Vagina (tissue), 2 donors: ENCODE measurements at regions of chrX and their contacts with region 1.

Region 1: GRCh38 chrX:29690061-29690460 is 525.3 kb upstream of the MAGEB2 start:
- DNase-seq: no peak
- H3K4me3 ChIP-seq: no peak overlapping the region
- H3K27ac ChIP-seq: no peak overlapping the region
- H3K4me1 ChIP-seq: no peaks in the 10 kb centered on the region
- H3K27me3 ChIP-seq: no peaks in the 10 kb centered on the region
- CTCF ChIP-seq: no peak
- POLR2A ChIP-seq: no peak

Region 2: DNA sequence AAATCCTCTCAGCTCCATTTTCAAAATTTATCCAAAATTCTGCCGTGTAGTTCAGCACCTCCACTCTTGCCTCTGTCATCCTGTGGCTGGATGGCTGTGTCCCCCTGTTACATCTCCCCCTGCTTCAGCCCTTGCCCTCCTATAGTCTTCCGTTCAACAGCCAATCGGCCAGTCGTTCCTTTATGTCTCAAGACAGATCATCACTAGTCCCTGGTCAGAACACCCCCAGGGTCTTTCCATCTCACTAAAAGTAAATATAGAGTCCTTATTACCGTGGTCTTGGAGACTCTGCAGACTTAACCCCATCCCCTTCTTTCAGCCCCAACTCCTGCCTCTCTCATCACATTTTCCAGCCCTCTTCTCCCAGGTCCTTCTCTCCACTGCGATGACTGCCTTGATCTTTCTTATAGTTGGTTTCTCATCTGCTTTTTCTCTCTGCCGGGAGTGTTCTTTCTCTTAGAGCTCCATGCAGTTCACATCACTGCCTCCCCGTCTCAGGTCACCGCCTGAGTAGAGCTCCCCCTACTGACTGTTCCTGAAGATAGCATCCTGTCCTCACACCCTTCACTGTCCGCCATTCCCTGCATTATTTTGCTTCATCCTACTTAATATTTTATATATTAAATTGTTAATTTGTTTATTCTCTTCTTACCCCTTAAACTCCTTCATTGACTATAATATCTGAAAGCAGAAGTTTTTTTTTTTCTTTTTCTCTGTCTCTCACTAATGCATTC is 211.6 kb before region 1 on chrX:
- intact Hi-C with region 1: no loop called
- DNase-seq: no peak
- H3K4me3 ChIP-seq: no peak overlapping the region
- H3K27ac ChIP-seq: no peak overlapping the region
- H3K4me1 ChIP-seq: no peaks in the 10 kb centered on the region
- H3K27me3 ChIP-seq: no peaks in the 10 kb centered on the region
- CTCF ChIP-seq: no peak
- POLR2A ChIP-seq: no peak

Region 3: GRCh38 chrX:29587107-29587506 is 103.0 kb before region 1 on chrX:
- intact Hi-C with region 1: no loop called
- DNase-seq: no peak
- H3K4me3 ChIP-seq: no peak overlapping the region
- H3K27ac ChIP-seq: no peak overlapping the region
- H3K4me1 ChIP-seq: no peaks in the 10 kb centered on the region
- H3K27me3 ChIP-seq: no peaks in the 10 kb centered on the region
- CTCF ChIP-seq: no peak
- POLR2A ChIP-seq: no peak

Region 4: DNA sequence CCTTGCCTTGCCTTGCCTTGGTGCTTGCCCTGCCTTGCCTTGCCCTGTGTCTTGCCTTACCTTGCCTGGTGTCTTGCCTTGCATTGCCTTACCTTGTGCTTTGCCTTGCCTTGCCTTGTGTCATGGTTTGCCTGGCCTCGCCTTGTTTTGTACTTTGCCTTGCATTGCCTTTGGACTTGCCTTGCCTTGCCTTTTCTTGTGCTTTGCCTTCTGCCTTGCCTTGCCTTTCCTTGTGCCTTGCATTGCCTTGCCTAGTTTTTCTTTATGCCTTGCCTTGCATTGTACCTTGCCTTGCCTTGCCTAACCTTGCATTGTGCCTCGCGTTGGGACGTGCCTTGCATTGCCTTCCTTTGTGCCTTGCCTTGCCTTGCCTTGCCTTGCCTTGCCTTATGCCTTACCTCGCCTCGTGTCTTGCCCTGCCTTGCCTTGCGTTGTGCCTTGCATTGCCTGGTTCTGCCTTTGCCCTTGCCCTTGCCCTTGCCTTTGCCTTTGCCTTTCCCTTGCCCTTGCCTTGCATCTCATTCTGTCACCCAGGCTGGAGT is 1116.2 kb after region 1 on chrX:
- intact Hi-C with region 1: no loop called
- DNase-seq: peak in 1 of 2 donors; percentile 85
- H3K4me3 ChIP-seq: no peak overlapping the region
- H3K27ac ChIP-seq: no peak overlapping the region
- H3K4me1 ChIP-seq: no peaks in the 10 kb centered on the region
- H3K27me3 ChIP-seq: no peaks in the 10 kb centered on the region
- CTCF ChIP-seq: no peak
- POLR2A ChIP-seq: no peak

Region 5: DNA sequence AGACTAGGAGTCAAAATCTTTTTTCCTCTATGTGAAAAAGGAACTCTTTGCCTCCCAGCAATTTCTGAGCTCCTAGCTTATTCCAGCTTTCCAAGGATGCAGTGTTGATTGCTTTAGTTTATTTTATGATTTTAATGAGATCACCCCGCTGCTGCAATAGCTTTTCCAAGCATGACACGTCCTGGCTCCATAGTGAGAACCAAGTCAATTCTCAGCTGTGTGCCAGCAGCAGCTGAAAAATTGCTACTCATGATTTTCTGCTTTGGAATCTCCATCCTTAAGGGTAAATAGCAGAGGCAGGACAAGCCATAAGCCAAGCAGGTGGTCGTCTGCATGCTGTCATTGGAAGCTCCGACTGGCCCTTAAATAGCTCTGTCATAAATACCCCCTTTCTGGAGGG is 1317.3 kb after region 1 on chrX:
- intact Hi-C with region 1: loop called (anchors 10 kb)
- DNase-seq: no peak
- H3K4me3 ChIP-seq: no peak overlapping the region
- H3K27ac ChIP-seq: no peak overlapping the region
- H3K4me1 ChIP-seq: no peaks in the 10 kb centered on the region
- H3K27me3 ChIP-seq: no peaks in the 10 kb centered on the region
- CTCF ChIP-seq: no peak
- POLR2A ChIP-seq: no peak